ENCODE measurements at regions of chr1 and their contacts with region 1.

Region 1: DNA sequence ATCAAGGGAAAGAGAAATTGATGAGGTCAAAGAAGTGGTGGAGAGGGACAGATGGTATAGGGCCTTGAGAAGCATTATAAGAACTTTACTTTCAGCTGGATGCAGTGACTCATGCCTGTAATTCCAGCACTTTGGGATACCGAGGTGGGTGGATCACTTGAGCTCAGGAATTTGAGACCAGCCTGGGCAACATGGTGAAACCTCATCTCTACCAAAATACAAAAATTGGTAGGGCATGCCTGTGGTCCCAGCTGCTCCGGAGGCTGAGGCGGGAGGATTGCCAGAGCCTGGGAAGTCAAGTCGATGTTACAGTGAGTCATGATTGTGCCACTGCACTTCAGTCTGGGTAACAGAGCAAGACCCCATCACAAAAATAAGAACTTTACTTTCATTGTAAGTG is 5.7 kb downstream of the TMEM50A start:
- DNase-seq: no peak
- CTCF ChIP-seq: no peak

Region 2: DNA sequence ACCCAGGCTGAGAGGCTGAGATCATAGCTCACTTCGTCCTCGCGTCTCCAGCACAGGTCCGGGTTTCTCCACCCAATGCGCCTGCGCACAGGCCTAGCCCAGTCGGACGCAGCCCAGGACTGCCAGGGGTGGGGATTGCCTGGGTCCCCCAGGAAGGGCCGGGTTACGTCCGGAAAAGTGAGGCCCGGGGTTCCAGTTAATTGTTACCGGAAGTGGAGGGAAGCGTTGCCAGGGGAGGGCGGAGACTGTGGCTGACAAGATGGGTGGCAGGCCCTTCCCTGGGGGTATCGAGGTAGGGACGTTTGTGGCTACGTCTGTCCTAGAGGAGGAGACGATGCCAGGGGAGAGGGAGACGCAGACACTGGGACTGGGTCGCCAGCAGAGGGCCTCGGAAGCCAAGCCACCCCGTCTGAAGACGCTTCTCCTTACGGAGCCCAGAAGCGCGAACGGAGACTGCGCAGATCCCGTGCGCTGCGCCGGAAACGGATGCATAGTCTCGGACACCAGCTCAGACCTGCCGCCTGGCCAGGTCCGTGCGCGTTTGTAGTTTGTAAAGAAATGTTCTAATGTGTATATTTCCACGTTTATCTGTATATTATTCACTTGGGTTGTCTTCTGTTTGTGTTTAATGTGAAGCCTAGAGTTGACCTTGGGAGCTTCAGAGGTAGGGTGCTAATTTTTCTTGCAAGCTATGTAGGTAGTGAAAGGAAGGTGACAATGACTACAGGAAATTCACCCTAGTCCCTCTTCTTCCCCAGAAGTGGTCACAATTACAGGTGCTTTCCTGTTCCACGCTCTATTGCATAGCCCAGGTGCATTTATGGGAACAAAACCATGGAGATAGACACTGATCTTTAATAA is 104.0 kb before region 1 on chr1:
- in situ Hi-C with region 1: loop called (anchors 10 kb)
- DNase-seq: peak; percentile 90
- CTCF ChIP-seq: peak; percentile 65

Region 3: GRCh38 chr1:25616095-25616986 is 272.5 kb after region 1 on chr1 and contains the start of gene MAN1C1:
- in situ Hi-C with region 1: no loop called
- DNase-seq: peak; percentile 95
- CTCF ChIP-seq: no peak